ENCODE measurements at regions of chr3 and their contacts with region 1.

Region 1: GRCh38 chr3:4409415-4409814 is 57.7 kb downstream of the SUMF1 start:
- DNase-seq: peak; percentile 38
- H3K4me3 Mint-ChIP-seq: no peak overlapping the region
- H3K27ac Mint-ChIP-seq: no peak overlapping the region
- H3K4me1 Mint-ChIP-seq: peaks cover 24% of the 10 kb centered on the region
- H3K27me3 Mint-ChIP-seq: no peaks in the 10 kb centered on the region

Region 2: GRCh38 chr3:4421121-4421520 is 11.7 kb after region 1 on chr3:
- CTCF ChIA-PET with region 1: no interaction called
- intact Hi-C with region 1: loop called (anchors 1 kb)
- DNase-seq: peak; percentile 39
- H3K4me3 Mint-ChIP-seq: no peak overlapping the region
- H3K27ac Mint-ChIP-seq: no peak overlapping the region
- H3K4me1 Mint-ChIP-seq: peaks cover 19% of the 10 kb centered on the region
- H3K27me3 Mint-ChIP-seq: no peaks in the 10 kb centered on the region

Region 3: DNA sequence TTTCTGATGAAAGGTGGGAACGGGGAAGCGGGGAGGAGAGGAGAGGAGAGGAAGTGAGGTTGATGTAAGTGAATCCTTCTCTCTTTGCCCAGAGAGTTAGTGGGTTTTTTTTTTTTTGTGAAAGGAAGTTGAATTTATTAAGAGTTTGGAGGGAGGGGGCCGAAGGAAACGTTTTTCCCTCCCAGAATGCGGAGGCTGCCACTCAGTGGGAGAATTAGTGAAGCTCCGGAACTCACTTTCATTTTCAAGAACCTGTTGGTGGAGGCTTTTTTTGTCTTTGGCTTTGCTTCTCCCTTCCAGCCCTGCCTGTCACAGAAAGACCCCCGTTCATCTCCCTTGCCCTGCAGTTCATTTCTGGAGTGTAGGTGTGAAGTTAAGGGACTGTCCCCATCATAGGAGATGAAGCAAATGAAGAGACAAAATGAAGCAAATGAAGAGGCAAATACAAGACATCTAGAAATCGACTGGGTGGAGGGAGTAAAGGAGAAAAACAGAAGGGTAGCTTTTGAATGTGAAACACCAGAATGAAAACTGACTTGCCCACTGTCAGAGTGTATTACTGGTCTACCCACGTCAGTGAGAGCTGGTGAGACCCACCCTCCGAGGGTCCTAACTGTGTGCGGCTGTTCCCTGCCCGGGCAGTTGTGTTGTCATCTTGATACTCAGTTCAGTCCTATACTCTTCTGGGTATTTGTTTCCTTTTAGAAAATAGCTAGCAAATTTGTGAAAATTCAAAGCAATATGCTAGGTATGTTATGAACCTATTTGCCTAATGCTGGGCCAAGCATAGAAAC is 175.2 kb after region 1 on chr3:
- CTCF ChIA-PET with region 1: no interaction called
- intact Hi-C with region 1: loop called (anchors 2 kb)
- DNase-seq: peak; percentile 72
- H3K4me3 Mint-ChIP-seq: peak overlapping the region; percentile 70
- H3K27ac Mint-ChIP-seq: peak overlapping the region; percentile 83
- H3K4me1 Mint-ChIP-seq: peaks cover 61% of the 10 kb centered on the region
- H3K27me3 Mint-ChIP-seq: no peaks in the 10 kb centered on the region